Tibial artery (tissue), 4 donors: ENCODE measurements at regions of chr6 and their contacts with region 1.

Region 1: GRCh38 chr6:22184371-22184770 is 112.5 kb downstream of the PRL start:
- DNase-seq: no peak
- H3K4me3 ChIP-seq: no peak overlapping the region
- H3K27ac ChIP-seq: no peak overlapping the region
- H3K4me1 ChIP-seq: no peaks in the 10 kb centered on the region
- H3K27me3 ChIP-seq: no peaks in the 10 kb centered on the region
- CTCF ChIP-seq: no peak

Region 2: DNA sequence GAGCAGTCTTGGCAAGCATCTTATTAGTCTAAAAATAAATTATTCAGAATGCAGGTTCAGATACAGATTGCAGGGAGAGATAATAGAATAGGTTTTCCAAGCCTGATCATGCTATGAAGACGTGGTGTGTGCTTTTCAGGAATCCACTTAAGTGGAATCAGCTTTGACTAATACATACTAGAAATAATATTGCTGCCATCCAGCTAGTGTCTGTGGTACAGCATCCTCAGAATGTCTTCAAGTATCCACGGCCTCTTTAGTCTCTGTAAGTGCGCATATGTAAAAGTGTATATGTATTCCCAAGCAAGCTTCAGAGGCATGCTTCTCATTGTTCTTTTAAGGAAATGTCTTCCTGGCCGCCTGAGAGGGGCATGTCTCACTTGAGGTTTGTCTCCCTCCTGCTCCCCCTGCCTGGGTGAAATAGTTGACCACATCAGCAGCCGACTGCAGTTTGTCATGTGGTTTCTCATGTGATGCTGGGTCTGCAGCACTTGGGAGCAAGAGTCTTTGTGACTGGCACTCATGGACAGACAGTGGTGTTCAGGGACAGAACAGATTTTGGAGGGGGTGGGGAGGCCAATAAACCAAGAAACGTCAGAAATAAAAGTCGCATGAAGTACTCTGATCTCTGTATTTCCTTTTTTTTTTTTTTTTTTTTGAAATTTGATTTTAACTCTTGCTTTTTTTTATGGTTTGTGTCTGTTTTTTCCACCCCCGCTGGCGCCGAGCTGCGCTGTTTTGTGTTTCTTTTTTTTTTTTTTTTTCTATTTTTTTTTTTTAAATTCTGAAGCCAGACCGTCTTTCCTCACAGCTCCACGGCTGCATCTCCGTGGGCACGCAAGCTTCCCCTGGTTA is 38.3 kb before region 1 on chr6:
- intact Hi-C with region 1: no loop called
- DNase-seq: no peak
- H3K4me3 ChIP-seq: peak overlapping the region; percentile 14 to 31
- H3K27ac ChIP-seq: no peak overlapping the region
- H3K4me1 ChIP-seq: peaks cover 0 to 36% (median 27%) of the 10 kb centered on the region in 4 donors
- H3K27me3 ChIP-seq: no peaks in the 10 kb centered on the region
- CTCF ChIP-seq: peak in 1 of 2 experiments; percentile 22

Region 3: GRCh38 chr6:22227824-22228610 is 43.6 kb after region 1 on chr6:
- intact Hi-C with region 1: loop called (anchors 1 kb)
- DNase-seq: no peak
- H3K4me3 ChIP-seq: no peak overlapping the region
- H3K27ac ChIP-seq: no peak overlapping the region
- H3K4me1 ChIP-seq: no peaks in the 10 kb centered on the region
- H3K27me3 ChIP-seq: no peaks in the 10 kb centered on the region
- CTCF ChIP-seq: no peak

Region 4: DNA sequence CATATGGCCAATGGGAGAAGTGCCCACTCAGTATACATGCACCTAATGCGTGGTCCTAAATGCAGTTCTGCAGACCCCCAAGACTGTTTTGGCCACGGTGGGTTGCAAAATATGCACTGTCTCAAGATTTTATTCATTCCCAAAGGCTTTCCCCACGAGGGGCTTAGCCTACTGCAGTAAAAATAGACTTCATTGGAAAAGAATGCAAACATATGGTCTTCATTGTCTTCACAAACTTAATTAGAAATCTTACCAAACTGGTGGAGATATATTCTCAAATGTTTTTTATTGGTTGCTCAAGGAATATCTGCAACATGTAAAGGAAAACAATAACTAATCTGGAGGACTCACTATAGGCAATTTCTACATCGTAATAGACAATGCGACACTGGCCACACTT is 144.1 kb after region 1 on chr6:
- intact Hi-C with region 1: no loop called
- DNase-seq: no peak
- H3K4me3 ChIP-seq: no peak overlapping the region
- H3K27ac ChIP-seq: no peak overlapping the region
- H3K4me1 ChIP-seq: no peaks in the 10 kb centered on the region
- H3K27me3 ChIP-seq: no peaks in the 10 kb centered on the region
- CTCF ChIP-seq: no peak

Region 5: DNA sequence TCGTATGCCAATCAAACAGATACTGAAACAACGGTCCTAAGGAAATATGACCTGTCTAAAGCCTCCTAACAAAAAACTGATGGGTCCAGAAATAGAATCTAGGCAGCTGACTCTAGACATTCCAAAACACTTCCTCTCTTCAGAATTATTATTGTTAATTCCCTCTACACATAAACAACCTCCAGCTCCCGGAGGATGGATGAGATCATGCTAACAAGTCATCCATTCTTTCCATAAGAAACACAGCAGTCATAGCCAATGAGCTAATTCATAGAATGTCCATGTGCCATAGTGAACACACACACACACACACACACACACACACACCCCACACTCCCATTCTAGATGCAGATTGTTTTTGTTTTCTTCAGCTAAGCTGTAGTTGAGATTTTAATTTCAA is 429.3 kb after region 1 on chr6:
- intact Hi-C with region 1: no loop called
- DNase-seq: no peak
- H3K4me3 ChIP-seq: no peak overlapping the region
- H3K27ac ChIP-seq: no peak overlapping the region
- H3K4me1 ChIP-seq: peaks cover 0 to 27% (median 4%) of the 10 kb centered on the region in 4 donors
- H3K27me3 ChIP-seq: no peaks in the 10 kb centered on the region
- CTCF ChIP-seq: no peak